ENCODE measurements at regions of chr9 and their contacts with region 1.

Region 1: GRCh38 chr9:69421908-69422801 is 97.1 kb downstream of the ENTREP1 start:
- DNase-seq: no peak
- H3K4me3 ChIP-seq: no peak overlapping the region
- H3K27ac ChIP-seq: no peak overlapping the region
- H3K4me1 ChIP-seq: no peaks in the 10 kb centered on the region
- H3K27me3 ChIP-seq: peaks cover 9% of the 10 kb centered on the region
- CTCF ChIP-seq: peak; percentile 82

Region 2: DNA sequence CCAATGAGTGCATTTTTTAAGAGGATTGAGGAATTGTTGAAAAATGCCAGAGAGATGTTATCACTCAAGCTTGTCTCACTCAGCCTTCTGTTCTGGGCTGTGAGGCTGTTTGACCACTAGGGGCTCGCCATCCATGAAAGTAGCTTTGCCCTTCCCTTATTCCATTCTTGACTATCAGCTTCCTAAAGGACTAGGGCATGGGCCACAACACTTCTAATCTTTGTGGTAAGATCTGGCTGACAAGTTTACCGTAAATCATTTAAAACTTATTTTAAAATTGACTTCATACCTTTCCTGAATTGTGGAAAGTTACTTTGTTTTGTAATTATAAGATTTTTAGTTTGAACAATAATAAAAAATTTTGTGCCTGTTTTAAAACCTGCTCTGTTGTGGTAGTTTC is 198.6 kb before region 1 on chr9:
- intact Hi-C with region 1: no loop called
- DNase-seq: no peak
- H3K4me3 ChIP-seq: peak overlapping the region; percentile 16
- H3K27ac ChIP-seq: peak overlapping the region; percentile 34
- H3K4me1 ChIP-seq: peaks cover 16% of the 10 kb centered on the region
- H3K27me3 ChIP-seq: no peaks in the 10 kb centered on the region
- CTCF ChIP-seq: peak; percentile 74

Region 3: DNA sequence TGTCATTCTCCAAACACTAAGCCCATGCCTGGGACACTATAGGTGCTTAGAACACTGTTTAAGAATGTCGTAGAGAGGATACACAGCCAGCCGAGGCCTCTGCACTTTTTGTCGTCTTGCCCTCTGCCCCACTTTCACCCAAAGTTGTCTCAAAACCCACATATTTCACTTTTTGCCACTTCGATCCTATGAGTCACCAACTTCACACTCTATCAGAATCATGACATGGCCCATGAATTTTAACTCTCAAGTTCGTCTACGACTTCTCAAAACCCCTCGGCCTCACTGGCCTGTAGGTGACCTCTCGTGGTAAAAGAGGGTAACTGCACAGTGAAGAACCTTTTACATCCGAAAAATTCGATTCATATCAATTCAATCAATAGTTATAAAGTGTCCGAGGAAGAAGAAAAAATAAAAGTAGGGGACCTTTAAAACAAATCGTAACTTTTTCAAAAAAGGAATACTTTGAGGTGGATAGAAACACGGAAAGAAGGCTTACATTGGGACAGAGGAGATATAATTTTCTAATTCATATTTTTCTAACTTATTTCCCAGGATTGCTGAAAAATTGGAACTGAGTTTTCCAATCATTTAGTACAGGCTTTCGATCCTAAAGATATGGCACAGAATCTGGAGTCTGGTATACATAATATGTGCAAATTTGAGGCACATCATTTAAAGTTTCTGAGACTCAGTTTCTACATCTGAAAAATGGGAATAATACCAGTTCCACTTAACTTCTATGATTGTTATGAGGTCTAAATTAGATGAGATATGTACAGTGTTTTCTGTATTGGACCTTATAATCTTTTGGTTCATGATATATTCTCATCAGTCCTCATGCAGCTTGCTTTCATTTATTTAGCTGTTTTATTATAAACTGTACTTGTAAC is 127.4 kb after region 1 on chr9:
- intact Hi-C with region 1: loop called (anchors 2 kb)
- DNase-seq: no peak
- H3K4me3 ChIP-seq: peak overlapping the region; percentile 4
- H3K27ac ChIP-seq: no peak overlapping the region
- H3K4me1 ChIP-seq: peaks cover 11% of the 10 kb centered on the region
- H3K27me3 ChIP-seq: no peaks in the 10 kb centered on the region
- CTCF ChIP-seq: peak; percentile 90

Region 4: GRCh38 chr9:69672596-69673310 is 250.6 kb after region 1 on chr9:
- intact Hi-C with region 1: no loop called
- DNase-seq: peak; percentile 83
- H3K4me3 ChIP-seq: peak overlapping the region; percentile 96
- H3K27ac ChIP-seq: peak overlapping the region; percentile 94
- H3K4me1 ChIP-seq: peaks cover 26% of the 10 kb centered on the region
- H3K27me3 ChIP-seq: no peaks in the 10 kb centered on the region
- CTCF ChIP-seq: peak; percentile 94

Region 5: GRCh38 chr9:69885474-69885929 is 463.3 kb after region 1 on chr9:
- intact Hi-C with region 1: loop called (anchors 10 kb)
- DNase-seq: no peak
- H3K4me3 ChIP-seq: no peak overlapping the region
- H3K27ac ChIP-seq: no peak overlapping the region
- H3K4me1 ChIP-seq: peaks cover 12% of the 10 kb centered on the region
- H3K27me3 ChIP-seq: no peaks in the 10 kb centered on the region
- CTCF ChIP-seq: no peak